ENCODE measurements at regions of chr4 and their contacts with region 1.

Region 1: GRCh38 chr4:2241410-2242353 is at the starts of genes HAUS3 and POLN:
- DNase-seq: peak; percentile 97
- H3K4me3 ChIP-seq: peak within 1 kb of the TSS; percentile 63 to 97 (median 96)
- H3K27ac ChIP-seq: peak within 1 kb of the TSS; percentile 52
- H3K4me1 ChIP-seq: peaks cover 14% of the 10 kb centered on the region
- H3K27me3 ChIP-seq: no peaks in the 10 kb centered on the region
- CTCF ChIP-seq: peak in 1 of 2 donors; percentile 3
- total RNA-seq, gene HAUS3: 9.2 to 12.8 TPM
- total RNA-seq, gene POLN: 0.42 to 0.83 TPM

Region 2: DNA sequence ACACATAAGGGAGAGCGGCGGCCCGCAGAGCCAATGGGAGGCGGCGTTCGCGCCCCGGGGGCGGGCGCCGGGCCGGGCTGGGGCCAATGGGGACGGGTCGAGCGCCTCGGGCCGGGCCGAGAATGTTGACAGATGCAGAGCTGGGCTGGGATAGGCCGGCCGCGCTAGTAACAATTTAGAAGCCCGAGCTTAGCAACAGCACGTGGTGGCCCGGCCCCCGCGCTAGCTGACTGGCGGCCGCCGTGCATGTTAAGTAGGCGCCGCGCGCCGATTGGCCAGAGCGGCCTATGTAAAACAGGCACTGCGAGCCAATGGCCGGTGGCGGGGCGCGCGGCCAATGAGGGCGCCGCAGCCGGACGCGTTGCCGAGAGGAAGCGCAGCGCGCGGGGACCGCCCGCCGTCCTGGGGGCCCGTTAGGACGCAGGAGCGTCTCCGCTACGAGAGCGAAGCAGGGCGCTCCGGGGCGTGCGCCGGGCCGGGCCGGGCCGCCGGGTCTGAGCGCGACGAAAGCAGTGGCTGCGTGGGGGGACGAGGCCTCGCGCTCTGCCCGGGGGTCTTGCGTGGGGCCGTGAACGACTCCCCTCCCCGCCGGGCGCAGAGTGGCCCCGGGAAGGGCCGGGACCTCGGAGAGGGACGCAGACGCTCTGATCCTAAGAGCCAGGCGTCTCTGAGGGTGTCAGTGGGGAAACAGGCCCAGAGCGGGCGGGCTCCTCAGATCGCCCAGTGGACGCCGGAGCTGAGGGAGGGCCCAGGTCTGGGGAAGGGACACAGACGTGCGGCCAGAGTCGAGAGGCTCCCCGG is 20.7 kb after region 1 on chr4:
- CTCF ChIA-PET with region 1: no interaction called
- dilution Hi-C with region 1: no loop called
- in situ Hi-C with region 1: no loop called
- intact Hi-C with region 1: loop called (anchors 1 kb)
- DNase-seq: peak; percentile 100
- H3K4me3 ChIP-seq: peak overlapping the region; percentile 37 to 80 (median 52)
- H3K27ac ChIP-seq: no peak overlapping the region
- H3K4me1 ChIP-seq: peaks cover 18% of the 10 kb centered on the region
- H3K27me3 ChIP-seq: no peaks in the 10 kb centered on the region
- CTCF ChIP-seq: no peak

Region 3: DNA sequence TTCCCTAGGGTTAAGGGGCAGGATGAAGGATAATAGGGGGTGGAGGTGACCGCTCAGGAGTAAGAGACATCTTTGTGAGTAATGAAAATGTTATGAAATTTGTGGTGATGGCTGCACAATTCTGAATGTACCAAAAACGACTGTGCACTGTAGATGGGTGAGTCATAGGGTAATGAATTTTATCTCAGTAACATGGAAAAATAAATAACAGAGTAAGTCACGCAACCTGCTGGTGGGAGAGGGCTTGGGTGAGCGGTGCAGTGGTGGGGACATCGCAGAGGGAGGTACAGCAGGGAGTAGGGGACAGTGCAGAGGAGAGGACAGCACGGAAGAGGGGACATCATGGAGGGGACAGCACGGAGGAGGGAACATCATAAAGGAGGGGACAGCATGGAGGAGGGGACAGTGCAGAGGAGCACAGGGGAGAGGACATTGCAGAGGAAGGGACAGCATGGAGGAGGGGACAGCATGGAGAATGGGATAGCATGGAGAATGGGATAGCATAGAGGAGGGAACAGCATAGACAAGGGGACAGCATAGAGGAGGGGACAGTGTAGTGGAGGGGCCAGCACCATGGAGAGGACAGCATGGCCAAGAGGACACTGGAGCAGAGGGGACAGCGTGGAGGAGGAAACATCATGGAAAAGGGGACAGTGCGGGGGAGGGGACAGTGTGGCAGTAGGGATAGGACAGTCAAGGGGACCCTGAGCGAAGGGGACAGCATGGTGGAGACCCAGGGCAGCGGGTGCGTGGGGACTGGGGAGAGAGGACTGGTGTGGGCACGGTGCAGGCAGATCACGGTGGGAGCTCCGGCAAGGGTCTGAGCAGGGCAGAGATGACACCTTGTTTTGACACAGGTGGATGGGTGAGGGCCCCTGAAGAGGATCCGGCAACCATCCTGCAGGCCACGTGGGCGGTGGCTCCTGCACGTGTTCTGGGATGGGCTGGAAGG is 88.7 kb after region 1 on chr4:
- CTCF ChIA-PET with region 1: no interaction called
- dilution Hi-C with region 1: no loop called
- in situ Hi-C with region 1: no loop called
- intact Hi-C with region 1: loop called (anchors 5 kb)
- DNase-seq: peak; percentile 89
- H3K4me3 ChIP-seq: no peak overlapping the region
- H3K27ac ChIP-seq: no peak overlapping the region
- H3K4me1 ChIP-seq: peaks cover 16% of the 10 kb centered on the region
- H3K27me3 ChIP-seq: no peaks in the 10 kb centered on the region
- CTCF ChIP-seq: peak in 1 of 2 donors; percentile 15

Region 4: DNA sequence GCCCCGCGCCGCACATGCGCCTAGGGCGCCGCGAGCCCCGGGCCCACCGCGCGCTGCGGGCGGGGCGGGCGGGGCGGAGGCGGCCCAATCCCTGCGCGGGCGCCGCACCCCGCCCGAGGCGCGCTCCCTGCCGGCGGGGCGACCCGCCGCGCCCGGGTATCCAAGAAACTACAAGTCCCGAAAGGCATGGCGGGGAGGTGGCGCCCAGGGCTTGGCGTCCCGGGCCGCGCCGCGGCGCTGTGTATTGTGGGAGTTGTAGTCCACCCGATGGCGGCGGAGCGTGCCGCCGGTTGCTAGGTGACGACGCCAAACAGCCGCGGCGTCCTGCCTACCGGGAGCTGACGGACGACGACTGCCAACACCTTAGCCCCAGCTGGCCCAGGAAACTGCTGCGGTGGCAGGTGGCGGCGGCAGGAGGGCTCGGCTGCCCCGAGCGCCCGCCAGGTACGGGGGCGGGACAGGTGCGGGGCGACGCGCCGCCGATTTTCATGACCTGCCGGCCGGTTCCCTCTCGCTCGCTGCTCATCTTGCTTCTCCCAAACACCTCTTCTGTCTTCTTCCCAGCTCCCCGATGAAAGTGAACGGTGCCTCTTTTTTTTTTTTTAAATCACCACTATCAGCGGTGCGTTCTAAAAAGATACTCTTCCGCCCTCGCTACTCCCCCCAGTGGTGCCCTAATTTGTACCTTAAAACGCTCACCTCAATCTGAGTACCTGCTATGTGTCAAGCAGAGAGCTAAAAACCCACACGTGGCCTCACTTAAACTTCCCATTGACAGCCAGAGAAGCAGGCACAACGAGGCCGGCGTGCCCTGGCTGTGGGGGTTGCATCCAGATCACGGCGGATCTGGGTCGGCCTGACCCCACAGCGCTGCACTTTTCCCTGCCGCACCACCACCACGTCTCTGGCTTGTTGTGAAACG is 177.2 kb after region 1 on chr4 and contains the start of gene CFAP99:
- CTCF ChIA-PET with region 1: no interaction called
- dilution Hi-C with region 1: no loop called
- in situ Hi-C with region 1: no loop called
- intact Hi-C with region 1: loop called (anchors 2 kb)
- DNase-seq: peak; percentile 92
- H3K4me3 ChIP-seq: peak within 1 kb of the TSS; percentile 41 to 52 (median 47)
- H3K27ac ChIP-seq: no peak within 1 kb of the TSS
- H3K4me1 ChIP-seq: peaks cover 22% of the 10 kb centered on the region
- H3K27me3 ChIP-seq: peaks cover 39% of the 10 kb centered on the region
- CTCF ChIP-seq: peak in 1 of 2 donors; percentile 15
- total RNA-seq, gene CFAP99: not detected

Region 5: GRCh38 chr4:2451821-2452785 is 210.4 kb after region 1 on chr4:
- CTCF ChIA-PET with region 1: no interaction called
- dilution Hi-C with region 1: loop called (anchors 5 kb)
- in situ Hi-C with region 1: loop called in 1 of 2 experiments (anchors 25 kb)
- intact Hi-C with region 1: no loop called
- DNase-seq: no peak
- H3K4me3 ChIP-seq: no peak overlapping the region
- H3K27ac ChIP-seq: no peak overlapping the region
- H3K4me1 ChIP-seq: no peaks in the 10 kb centered on the region
- H3K27me3 ChIP-seq: no peaks in the 10 kb centered on the region
- CTCF ChIP-seq: no peak

Region 6: DNA sequence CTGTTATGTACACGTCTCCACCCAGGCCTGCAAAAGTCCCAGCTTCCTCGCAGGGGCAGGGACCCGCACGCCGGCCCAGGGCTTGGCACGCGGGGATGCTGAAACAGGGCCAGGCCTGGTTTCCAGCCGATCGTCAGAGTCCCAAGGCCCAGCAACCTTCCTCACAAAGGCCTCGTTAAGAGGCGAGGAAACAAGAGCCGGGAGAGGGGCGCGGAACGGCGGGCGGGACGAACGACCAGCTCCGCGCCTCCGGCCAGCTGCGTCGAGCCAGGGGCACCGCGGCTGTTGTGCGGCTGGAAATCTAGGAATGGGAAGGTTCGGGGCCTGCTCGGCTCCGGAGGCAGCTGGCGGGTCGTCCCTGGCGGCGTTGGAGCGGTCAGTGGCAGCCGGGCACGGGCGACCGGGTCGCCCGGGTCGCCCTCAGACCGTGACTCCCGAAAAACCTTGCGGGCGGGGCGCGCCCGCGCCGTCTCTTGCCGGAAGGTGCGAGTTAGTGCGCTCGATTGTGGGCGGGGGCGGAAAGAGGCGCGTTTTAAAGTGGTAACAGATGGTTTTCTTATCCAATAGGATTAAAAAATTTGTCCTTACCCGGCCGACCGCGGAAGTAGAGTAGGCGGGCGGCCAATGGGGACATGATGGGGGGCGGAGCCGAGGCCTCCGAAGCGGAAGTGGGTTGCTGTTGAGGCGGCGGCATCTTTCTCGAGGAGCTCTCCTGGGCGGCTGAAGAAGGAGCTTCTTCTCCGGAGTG is 226.9 kb after region 1 on chr4 and contains the start of gene RNF4:
- CTCF ChIA-PET with region 1: no interaction called
- dilution Hi-C with region 1: no loop called
- in situ Hi-C with region 1: loop called in 1 of 2 experiments (anchors 25 kb)
- intact Hi-C with region 1: no loop called
- DNase-seq: peak; percentile 95
- H3K4me3 ChIP-seq: peak within 1 kb of the TSS; percentile 82 to 98 (median 95)
- H3K27ac ChIP-seq: peak within 1 kb of the TSS; percentile 74
- H3K4me1 ChIP-seq: peaks cover 18% of the 10 kb centered on the region
- H3K27me3 ChIP-seq: no peaks in the 10 kb centered on the region
- CTCF ChIP-seq: no peak
- total RNA-seq, gene RNF4: 57.3 to 60.2 TPM